AG04449 (cell line): ENCODE measurements at regions of chr4 and their contacts with region 1.

Region 1: GRCh38 chr4:10096201-10096977 is 20.2 kb downstream of the WDR1 start:
- DNase-seq: peak; percentile 36
- H3K4me3 ChIP-seq: no peak overlapping the region
- CTCF ChIP-seq: no peak

Region 2: DNA sequence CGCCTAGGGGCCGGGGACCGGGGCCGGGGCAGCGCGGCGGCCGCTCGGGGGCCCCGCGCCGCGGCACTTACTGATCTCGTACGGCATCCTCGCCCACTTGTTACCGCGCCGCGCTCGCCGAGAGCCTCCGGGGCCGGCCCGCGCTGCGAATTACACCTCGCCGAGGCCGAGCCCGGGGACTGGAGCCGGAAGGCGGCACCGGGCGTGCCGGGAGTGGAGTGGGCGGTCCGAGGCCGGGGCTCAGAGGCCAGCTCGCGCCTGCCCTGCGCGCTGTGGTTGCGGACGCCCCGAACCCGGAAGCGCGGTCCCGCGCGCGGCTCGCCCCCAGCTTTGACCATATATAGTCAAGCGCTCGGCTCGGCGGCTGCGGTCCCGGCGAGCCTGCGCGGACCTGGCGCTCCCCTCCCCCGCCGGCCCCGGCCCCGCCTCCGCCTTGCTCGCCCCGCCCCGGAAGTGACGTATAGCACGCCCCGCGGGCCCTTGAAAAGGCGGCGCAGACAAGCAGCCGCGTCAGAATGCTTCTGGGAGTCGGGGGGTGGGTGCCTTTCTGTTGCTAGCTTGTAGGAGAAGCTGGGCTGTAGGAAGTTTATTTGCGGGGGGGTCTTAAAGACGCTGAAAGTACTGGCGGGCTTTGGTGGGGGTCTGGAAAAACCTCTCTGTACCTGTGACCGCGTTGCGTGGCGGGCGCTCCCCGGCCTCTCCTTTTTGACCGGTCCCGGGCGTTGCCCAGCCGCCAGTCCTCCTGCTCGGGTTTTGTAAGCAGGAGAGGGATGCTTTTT is 20.4 kb after region 1 on chr4 and contains the start of gene WDR1:
- CTCF ChIA-PET with region 1: interaction called, 6 read pairs
- POLR2A ChIA-PET with region 1: interaction called, 87 read pairs
- DNase-seq: peak; percentile 57
- H3K4me3 ChIP-seq: peak within 1 kb of the TSS; percentile 85
- CTCF ChIP-seq: no peak

Region 3: GRCh38 chr4:10442976-10443375 is 346.6 kb after region 1 on chr4:
- CTCF ChIA-PET with region 1: no interaction called
- POLR2A ChIA-PET with region 1: no interaction called
- DNase-seq: no peak
- H3K4me3 ChIP-seq: no peak overlapping the region
- CTCF ChIP-seq: no peak